Lower leg skin (tissue), 4 donors: ENCODE measurements at regions of chr1 and their contacts with region 1.

Region 1: DNA sequence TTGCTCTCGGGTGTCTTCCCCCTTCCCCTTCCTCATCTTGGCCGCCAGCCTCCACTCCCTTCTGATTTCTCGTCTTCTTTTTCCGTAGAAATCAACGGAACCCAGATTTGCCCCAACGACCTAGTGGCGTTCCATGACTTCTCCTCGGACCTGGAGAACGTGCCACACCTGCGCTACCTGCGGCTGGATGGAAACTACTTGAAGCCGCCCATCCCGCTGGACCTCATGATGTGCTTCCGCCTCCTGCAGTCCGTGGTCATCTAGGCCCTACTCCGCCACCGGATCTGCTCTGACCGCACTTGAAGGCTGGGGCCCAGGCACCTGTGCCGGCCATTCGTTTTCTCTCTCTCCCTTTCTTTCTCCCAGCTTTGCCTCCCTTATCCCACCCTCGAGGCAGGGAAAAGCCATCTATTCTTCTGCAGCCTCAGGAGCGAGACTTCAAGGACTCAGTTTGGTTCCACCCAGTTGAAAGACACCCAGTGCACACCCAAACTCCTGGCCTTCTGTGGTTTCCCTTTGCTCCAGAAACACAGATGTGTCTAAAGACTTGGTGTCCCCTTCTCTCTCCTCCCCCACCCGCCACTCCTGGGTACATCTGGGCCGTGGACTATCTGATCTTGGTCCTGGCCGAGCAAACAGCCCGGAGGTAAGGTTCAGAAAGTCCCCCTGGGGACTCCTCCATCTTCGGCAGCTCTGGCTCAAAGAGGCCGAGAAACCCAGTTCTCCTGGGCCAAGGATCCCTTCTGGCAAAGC is 7.2 kb upstream of the OPTC start:
- DNase-seq: no peak
- H3K4me3 ChIP-seq: no peak overlapping the region
- CTCF ChIP-seq: no peak
- POLR2A ChIP-seq: no peak

Region 2: GRCh38 chr1:203273206-203273868 is 213.5 kb before region 1 on chr1:
- intact Hi-C with region 1: loop called (anchors 5 kb)
- DNase-seq: peak; percentile 85 to 97
- H3K4me3 ChIP-seq: no peak overlapping the region
- CTCF ChIP-seq: peak in 1 of 3 donors; percentile 98
- POLR2A ChIP-seq: no peak

Region 3: DNA sequence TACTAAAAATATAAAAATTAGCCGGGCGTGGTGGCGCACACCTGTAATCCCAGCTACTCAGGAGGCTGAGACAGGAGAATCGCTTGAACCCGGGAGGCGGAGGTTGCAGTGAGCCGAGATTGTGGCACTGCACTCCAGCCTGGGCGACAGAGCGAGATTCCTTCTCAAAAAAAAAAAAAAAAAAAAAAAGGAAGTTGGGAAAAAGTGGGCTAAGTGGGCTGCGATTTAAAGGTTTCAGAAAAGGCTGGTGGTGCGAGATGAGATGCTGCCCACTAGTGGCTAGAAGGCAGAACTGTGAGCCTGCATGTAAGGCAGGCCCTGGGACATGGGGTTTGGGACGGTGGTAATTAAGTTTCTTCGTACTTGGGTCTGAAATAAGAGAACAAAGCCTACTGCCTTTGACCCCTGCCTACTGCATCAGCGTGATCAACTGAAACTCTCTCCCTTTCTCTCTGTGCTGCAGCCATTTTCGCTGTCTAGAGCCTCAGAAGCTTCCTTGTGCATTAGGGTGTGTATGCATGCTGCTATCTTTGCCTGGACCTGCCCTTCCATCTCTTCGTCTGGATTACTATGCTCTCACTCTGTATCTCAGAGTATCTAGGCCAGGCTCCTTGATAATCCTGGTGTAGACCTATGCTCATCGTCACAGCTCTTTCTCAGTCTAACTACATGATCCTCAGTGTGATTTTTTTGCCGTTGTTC is 148.3 kb before region 1 on chr1:
- intact Hi-C with region 1: loop called (anchors 2 kb)
- DNase-seq: peak in 1 of 2 donors; percentile 91
- H3K4me3 ChIP-seq: no peak overlapping the region
- CTCF ChIP-seq: peak in 1 of 3 donors; percentile 64
- POLR2A ChIP-seq: no peak

Region 4: DNA sequence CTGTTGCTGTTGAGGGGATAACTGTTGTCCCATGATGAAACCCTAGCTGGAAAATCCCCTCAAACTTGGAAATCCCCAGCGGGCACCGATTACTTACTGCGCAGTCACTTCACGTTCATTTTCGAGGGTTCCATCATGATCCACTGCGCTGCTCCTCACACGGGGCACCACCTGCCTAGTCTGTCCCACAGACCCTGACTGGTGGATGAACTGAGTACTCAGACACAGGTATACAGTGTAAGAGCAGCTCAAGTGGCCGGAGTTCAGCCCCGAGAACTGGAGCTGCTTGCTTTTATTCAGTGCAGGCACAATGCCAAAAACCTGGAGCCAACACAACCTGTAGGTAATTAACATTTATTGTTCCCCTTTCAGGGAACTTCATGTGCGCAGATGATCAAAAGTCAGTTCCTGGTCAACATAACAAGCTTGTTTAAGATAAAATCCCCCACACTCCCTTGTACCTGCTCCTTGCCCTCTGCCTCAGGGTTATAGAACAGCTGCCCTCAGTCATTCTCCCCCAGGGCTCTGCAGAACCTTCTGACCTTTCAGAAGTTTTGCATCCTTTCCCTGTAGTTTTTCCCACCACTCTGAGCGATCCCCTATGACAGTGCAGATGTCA is 57.7 kb before region 1 on chr1:
- intact Hi-C with region 1: no loop called
- DNase-seq: peak in 1 of 2 donors; percentile 83
- H3K4me3 ChIP-seq: no peak overlapping the region
- CTCF ChIP-seq: no peak
- POLR2A ChIP-seq: no peak